ENCODE measurements at regions of chr7 and their contacts with region 1.

Region 1: GRCh38 chr7:5363729-5364128 is 59.9 kb downstream of the TNRC18 start:
- DNase-seq: no peak
- ATAC-seq: no peak
- H3K4me3 Mint-ChIP-seq: no peak overlapping the region
- H3K27ac Mint-ChIP-seq: no peak overlapping the region
- H3K4me1 Mint-ChIP-seq: no peaks in the 10 kb centered on the region
- H3K27me3 Mint-ChIP-seq: no peaks in the 10 kb centered on the region
- CTCF ChIP-seq: no peak

Region 2: DNA sequence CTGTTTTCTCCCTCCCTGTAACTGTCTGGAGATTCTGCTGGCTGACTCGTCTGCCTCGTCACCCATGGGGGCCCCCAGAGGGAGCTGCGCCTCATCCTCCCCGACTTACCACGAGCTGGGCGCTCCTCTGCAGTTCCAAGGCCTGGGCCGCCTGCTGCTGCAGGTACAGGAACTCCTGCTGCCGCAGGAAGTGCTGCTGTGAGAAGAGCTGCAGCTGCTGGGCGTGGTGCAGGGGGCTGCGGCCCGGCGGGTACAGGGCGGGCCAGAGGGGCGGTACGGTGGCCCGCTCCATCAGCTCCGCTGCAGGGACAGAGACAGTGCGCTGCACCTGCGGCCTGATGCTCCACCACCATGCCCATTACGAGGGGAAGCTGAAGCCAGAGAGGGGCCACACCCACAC is 12.2 kb after region 1 on chr7:
- CTCF ChIA-PET with region 1: interaction called, 19 read pairs
- POLR2A ChIA-PET with region 1: no interaction called
- DNase-seq: no peak
- ATAC-seq: no peak; the same call in 1 of the 2 replicates
- H3K4me3 Mint-ChIP-seq: no peak overlapping the region
- H3K27ac Mint-ChIP-seq: no peak overlapping the region; the same call in 1 of the 2 replicates
- H3K4me1 Mint-ChIP-seq: no peaks in the 10 kb centered on the region
- H3K27me3 Mint-ChIP-seq: no peaks in the 10 kb centered on the region
- CTCF ChIP-seq: no peak

Region 3: DNA sequence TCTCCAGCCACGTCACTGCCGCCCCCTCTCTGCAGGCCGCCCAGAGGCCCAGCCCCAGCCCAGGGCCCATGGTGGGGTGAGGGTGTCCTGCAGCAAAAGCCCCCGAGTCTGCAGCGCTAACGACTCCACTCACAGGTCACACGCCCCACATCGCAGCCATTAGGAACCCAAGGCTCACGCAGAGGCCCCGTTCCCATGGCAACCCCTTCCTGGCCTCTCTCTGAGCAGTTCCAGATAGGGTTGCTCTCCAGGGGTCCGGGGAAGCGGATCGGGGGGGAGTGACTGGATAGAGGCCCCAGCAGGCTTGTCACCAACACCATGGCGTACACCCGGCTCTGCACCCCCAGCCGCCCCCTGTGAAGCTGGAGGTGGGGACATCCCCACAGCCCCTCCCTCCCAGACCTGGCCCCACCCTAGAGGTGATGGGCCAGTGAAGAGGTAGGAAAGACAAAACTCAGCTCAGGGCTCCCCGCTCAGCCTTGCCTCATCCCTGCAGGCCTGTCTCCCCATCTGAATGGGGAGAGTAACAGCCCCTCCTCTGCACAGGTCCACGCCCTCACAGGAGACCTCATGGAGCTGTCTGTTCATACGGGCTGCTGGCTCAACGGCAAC is 18.7 kb after region 1 on chr7:
- CTCF ChIA-PET with region 1: interaction called, 23 read pairs
- POLR2A ChIA-PET with region 1: no interaction called
- DNase-seq: peak; percentile 68
- ATAC-seq: peak; percentile 70
- H3K4me3 Mint-ChIP-seq: no peak overlapping the region
- H3K27ac Mint-ChIP-seq: no peak overlapping the region
- H3K4me1 Mint-ChIP-seq: peaks cover 14% of the 10 kb centered on the region
- H3K27me3 Mint-ChIP-seq: no peaks in the 10 kb centered on the region
- CTCF ChIP-seq: no peak

Region 4: DNA sequence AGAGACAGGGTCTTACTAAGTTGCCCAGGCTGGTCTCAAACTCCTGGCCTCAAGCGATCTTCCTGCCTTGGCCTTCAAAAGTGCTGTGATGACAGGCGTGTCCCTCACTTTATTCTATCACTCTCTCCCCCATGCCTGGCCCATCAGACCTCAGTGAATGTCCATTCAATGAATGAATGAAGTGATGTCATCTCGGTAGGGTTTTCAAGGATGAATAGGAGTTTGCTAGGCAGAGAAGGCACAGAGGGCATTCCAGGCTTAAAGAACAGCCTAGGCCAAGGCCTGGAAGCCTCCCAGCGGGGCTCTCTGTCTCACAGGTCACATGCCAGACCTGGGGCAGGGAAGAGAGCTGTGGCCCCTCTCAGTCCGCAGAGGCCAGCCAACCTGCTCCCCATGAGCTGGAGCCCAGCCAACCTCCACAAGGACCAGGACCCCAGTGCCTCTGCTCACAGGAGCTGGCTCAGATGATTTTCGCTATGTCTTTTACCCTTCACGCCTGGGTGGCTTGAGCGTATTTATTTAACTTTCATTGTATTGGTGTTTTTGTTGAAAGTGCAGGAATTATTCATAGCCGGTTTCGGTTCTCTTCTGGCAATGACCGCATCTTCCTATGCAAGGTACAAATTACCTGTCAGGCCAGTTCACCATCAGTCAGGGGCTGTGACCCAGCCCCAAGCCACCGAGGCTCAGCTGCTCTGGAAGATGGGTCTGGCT is 71.7 kb after region 1 on chr7:
- CTCF ChIA-PET with region 1: no interaction called
- POLR2A ChIA-PET with region 1: interaction called, 13 read pairs
- DNase-seq: no peak
- ATAC-seq: no peak; the same call in 1 of the 2 replicates
- H3K4me3 Mint-ChIP-seq: no peak overlapping the region
- H3K27ac Mint-ChIP-seq: no peak overlapping the region
- H3K4me1 Mint-ChIP-seq: peaks cover 4% of the 10 kb centered on the region
- H3K27me3 Mint-ChIP-seq: peaks cover 52% of the 10 kb centered on the region
- CTCF ChIP-seq: no peak

Region 5: GRCh38 chr7:5450549-5451372 is 87.0 kb after region 1 on chr7:
- CTCF ChIA-PET with region 1: interaction called, 46 read pairs
- POLR2A ChIA-PET with region 1: no interaction called
- DNase-seq: peak; percentile 79
- ATAC-seq: peak; percentile 84
- H3K4me3 Mint-ChIP-seq: no peak overlapping the region
- H3K27ac Mint-ChIP-seq: no peak overlapping the region
- H3K4me1 Mint-ChIP-seq: peaks cover 6% of the 10 kb centered on the region
- H3K27me3 Mint-ChIP-seq: peaks cover 3% of the 10 kb centered on the region; the same call in 1 of the 2 replicates
- CTCF ChIP-seq: peak; percentile 56

Region 6: DNA sequence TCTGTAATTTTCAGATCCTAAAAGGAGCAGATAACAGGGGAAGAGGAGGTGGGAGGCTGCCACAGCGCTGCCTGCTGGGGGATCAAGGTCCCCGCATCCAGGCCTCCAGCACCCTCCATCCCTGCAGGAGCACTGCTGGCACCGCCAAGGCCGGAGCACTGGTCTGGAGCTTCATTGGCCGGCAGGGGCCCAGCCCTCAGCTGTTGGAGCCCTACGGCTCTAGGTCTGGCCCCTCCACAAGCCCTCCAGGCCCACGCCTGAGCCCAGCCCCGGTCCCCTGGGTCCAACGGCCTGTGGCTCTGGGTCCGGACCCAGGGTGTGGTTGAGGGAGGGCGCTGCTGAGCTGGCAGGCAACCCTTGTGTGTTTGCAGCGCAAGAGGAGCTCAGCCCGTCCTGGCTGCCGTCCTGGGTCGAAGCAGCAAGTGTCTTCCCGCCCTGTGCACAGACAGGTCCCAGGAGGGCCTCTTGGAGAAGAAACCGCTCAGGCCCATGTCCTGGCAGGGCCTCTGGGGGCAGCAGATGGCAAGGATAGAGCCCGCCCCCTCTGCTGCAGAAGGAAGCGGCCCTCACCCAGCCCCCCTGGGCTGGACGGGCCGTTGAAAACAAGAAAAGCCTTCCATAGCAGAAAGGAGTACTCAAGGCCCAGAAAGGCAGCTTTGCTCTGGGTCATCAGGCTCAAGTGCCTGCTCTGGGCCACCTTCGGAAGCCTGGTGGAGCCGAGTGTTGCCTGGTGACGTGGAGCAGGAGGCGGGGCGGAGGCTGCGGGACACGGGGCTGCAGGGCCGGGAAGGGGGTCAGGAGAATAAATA is 114.2 kb after region 1 on chr7:
- CTCF ChIA-PET with region 1: interaction called, 13 read pairs
- POLR2A ChIA-PET with region 1: no interaction called
- DNase-seq: peak; percentile 71
- ATAC-seq: peak; percentile 88
- H3K4me3 Mint-ChIP-seq: peak overlapping the region; percentile 40; the same call in 1 of the 2 replicates
- H3K27ac Mint-ChIP-seq: peak overlapping the region; percentile 98
- H3K4me1 Mint-ChIP-seq: peaks cover 20% of the 10 kb centered on the region
- H3K27me3 Mint-ChIP-seq: no peaks in the 10 kb centered on the region
- CTCF ChIP-seq: peak; percentile 33

Region 7: GRCh38 chr7:5677538-5678294 is 314.0 kb after region 1 on chr7:
- CTCF ChIA-PET with region 1: interaction called, 13 read pairs
- POLR2A ChIA-PET with region 1: no interaction called
- DNase-seq: peak; percentile 75
- ATAC-seq: peak; percentile 76
- H3K4me3 Mint-ChIP-seq: no peak overlapping the region
- H3K27ac Mint-ChIP-seq: no peak overlapping the region
- H3K4me1 Mint-ChIP-seq: peaks cover 33% of the 10 kb centered on the region
- H3K27me3 Mint-ChIP-seq: no peaks in the 10 kb centered on the region
- CTCF ChIP-seq: peak; percentile 60

Measured in WTC11 (cell line).